ENCODE measurements at regions of chr9 and their contacts with region 1.

Region 1: GRCh38 chr9:32384364-32385151 is at the start of gene ACO1:
- DNase-seq: peak; percentile 65
- H3K4me3 ChIP-seq: peak within 1 kb of the TSS; percentile 95
- H3K27ac ChIP-seq: peak within 1 kb of the TSS; percentile 71
- H3K27me3 ChIP-seq: no peaks in the 10 kb centered on the region
- CTCF ChIP-seq: no peak
- polyA plus RNA-seq, gene ACO1: 291 and 330 TPM in 2 replicates

Region 2: DNA sequence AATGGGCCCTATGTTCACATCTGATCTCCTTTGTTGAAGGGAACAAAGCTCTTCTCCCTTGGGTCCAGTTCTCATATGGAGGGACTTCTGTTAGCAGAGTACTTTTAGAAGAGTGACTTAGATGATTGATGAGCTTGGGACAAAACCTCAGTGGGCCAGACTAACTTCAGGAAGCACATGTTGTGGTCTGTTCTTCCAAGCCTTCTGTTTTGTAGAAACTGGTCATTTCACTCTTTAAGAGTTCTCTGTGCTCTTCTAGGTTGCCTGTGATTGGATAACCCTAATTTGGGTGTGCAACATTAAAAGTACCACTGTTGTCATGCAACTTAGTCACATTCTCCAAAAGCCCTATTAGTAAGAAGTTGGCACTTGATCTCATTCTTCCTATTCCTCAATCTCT is 183.7 kb before region 1 on chr9:
- CTCF ChIA-PET with region 1: no interaction called
- POLR2A ChIA-PET with region 1: no interaction called
- DNase-seq: no peak
- H3K4me3 ChIP-seq: no peak overlapping the region
- H3K27ac ChIP-seq: no peak overlapping the region
- H3K27me3 ChIP-seq: no peaks in the 10 kb centered on the region
- CTCF ChIP-seq: no peak

Region 3: DNA sequence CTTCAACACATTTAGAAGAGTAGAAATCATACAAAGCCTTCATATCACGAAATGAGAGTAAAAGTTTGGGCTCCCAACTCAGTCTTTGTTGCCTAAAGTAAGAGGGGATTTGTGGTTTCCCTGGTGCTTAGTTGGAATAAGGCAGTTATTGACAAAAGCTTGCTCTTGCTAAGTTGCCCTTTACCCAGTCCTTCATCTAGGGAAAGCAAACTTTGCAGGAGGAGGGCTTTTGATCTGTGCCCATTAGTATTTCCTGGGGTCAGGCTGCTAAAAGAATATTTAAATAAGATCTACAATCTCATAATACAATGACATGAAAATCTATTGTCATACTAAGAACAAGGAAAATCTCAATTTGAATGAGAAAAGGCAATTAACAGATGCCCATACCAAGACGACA is 84.2 kb before region 1 on chr9:
- CTCF ChIA-PET with region 1: no interaction called
- POLR2A ChIA-PET with region 1: no interaction called
- DNase-seq: no peak
- H3K4me3 ChIP-seq: no peak overlapping the region
- H3K27ac ChIP-seq: no peak overlapping the region
- H3K27me3 ChIP-seq: no peaks in the 10 kb centered on the region
- CTCF ChIP-seq: no peak

Region 4: GRCh38 chr9:32463500-32464293 is 79.1 kb after region 1 on chr9:
- CTCF ChIA-PET with region 1: interaction called, 9 read pairs
- POLR2A ChIA-PET with region 1: interaction called, 10 read pairs
- DNase-seq: no peak
- H3K4me3 ChIP-seq: no peak overlapping the region
- H3K27ac ChIP-seq: no peak overlapping the region
- H3K27me3 ChIP-seq: no peaks in the 10 kb centered on the region
- CTCF ChIP-seq: no peak

Region 5: GRCh38 chr9:32571969-32572899 is 187.7 kb after region 1 on chr9:
- CTCF ChIA-PET with region 1: interaction called, 1,261 read pairs
- POLR2A ChIA-PET with region 1: interaction called, 8 read pairs
- DNase-seq: no peak
- H3K4me3 ChIP-seq: peak overlapping the region; percentile 96
- H3K27ac ChIP-seq: peak overlapping the region; percentile 62
- H3K27me3 ChIP-seq: no peaks in the 10 kb centered on the region
- CTCF ChIP-seq: peak; percentile 80

Region 6: GRCh38 chr9:33024966-33025571 is 640.5 kb after region 1 on chr9 and contains the start of gene DNAJA1:
- CTCF ChIA-PET with region 1: interaction called, 6 read pairs
- POLR2A ChIA-PET with region 1: interaction called, 13 read pairs
- DNase-seq: peak; percentile 83
- H3K4me3 ChIP-seq: peak within 1 kb of the TSS; percentile 99
- H3K27ac ChIP-seq: peak within 1 kb of the TSS; percentile 94
- H3K27me3 ChIP-seq: no peaks in the 10 kb centered on the region
- CTCF ChIP-seq: no peak
- polyA plus RNA-seq, gene DNAJA1: 180 and 237 TPM in 2 replicates

Measured in AG04450 (cell line).